Ascending aorta (tissue), 2 donors: ENCODE measurements at regions of chr10 and their contacts with region 1.

Region 1: GRCh38 chr10:76106611-76107010 is 675.2 kb downstream of the LRMDA start:
- DNase-seq: no peak
- H3K4me3 ChIP-seq: no peak overlapping the region
- H3K27ac ChIP-seq: no peak overlapping the region
- H3K4me1 ChIP-seq: no peaks in the 10 kb centered on the region
- H3K27me3 ChIP-seq: no peaks in the 10 kb centered on the region
- CTCF ChIP-seq: no peak

Region 2: GRCh38 chr10:76303682-76304316 is 197.2 kb after region 1 on chr10:
- intact Hi-C with region 1: loop called (anchors 10 kb)
- DNase-seq: peak; percentile 22 to 85
- H3K4me3 ChIP-seq: peak overlapping the region in 1 of 2 donors; percentile 10
- H3K27ac ChIP-seq: no peak overlapping the region
- H3K4me1 ChIP-seq: peaks cover 0 to 4% of the 10 kb centered on the region in 2 donors
- H3K27me3 ChIP-seq: no peaks in the 10 kb centered on the region
- CTCF ChIP-seq: peak; percentile 38 to 66 (median 56)

Region 3: DNA sequence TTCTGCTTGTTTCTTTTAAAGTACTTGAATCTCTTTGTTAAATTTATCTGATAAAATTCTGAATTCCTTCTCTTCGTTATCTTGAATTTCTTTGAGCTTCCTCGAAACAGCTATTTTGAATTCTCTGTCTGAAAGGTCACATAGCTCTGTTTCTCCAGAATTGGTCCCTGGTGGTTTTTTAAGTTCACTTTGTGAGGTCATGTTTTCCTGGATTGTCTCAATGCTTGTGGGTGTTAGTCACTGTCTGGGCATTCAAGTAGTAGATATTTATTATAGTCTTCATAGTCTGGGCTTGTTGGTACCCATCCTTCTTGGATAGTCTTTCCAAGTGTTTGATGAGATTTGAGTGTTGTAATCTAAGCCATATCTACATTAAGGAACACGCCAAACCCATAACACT is 385.4 kb after region 1 on chr10:
- intact Hi-C with region 1: no loop called
- DNase-seq: no peak
- H3K4me3 ChIP-seq: no peak overlapping the region
- H3K27ac ChIP-seq: peak overlapping the region; percentile 81
- H3K4me1 ChIP-seq: peaks cover 0 to 2% of the 10 kb centered on the region in 2 donors
- H3K27me3 ChIP-seq: no peaks in the 10 kb centered on the region
- CTCF ChIP-seq: no peak